Caco-2 (cell line): ENCODE measurements at regions of chr7 and their contacts with region 1.

Region 1: DNA sequence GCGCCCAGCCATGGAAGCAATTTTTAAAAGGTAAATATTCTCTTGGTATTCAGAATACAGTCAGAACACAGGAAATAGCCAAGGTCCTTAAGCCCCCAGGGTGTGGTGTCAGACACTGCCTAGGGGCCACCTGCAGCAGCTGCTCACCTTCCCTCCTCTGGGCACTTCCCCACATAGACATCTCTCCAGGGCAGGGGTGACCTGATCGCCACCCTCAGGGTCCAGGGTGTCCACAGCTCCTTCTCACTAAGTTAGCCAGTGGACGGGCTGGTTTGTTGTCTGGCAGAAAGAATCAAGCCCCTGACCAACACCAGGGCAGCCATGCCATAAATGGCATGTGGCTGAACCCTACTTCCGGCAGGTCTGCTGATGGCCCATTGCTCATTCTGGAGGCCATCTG is 15.9 kb downstream of the URGCP start:
- DNase-seq: no peak
- H3K4me3 ChIP-seq: no peak overlapping the region
- H3K4me3 Mint-ChIP-seq: no peak overlapping the region
- H3K27ac Mint-ChIP-seq: no peak overlapping the region
- H3K4me1 ChIP-seq: peaks cover 10% of the 10 kb centered on the region
- H3K4me1 Mint-ChIP-seq: peaks cover 8% of the 10 kb centered on the region
- H3K27me3 ChIP-seq: no peaks in the 10 kb centered on the region
- H3K27me3 Mint-ChIP-seq: no peaks in the 10 kb centered on the region
- CTCF ChIP-seq: no peak

Region 2: DNA sequence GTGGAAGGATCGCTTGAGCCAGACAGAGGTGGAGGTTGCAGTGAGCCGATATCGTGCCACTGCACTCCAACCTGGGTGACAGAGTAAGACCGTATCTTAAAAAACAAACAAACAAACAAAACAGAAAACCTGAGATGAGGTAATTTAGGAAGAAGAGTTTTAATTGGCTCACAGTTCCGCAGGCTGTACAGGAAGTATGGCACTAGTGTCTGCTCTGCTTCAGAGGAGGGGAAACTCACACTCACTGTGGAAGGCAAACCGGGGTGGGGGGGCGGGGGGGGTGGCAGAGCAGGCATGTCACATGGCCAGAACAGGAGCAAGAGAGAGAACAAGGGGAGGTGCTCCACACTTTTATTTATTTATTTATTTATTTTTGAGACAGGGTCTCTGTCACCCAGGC is 40.8 kb after region 1 on chr7:
- CTCF ChIA-PET with region 1: no interaction called
- POLR2A ChIA-PET with region 1: no interaction called
- intact Hi-C with region 1: no loop called
- DNase-seq: peak in 1 of 2 experiments; percentile 1
- H3K4me3 ChIP-seq: no peak overlapping the region
- H3K4me3 Mint-ChIP-seq: no peak overlapping the region
- H3K27ac Mint-ChIP-seq: no peak overlapping the region
- H3K4me1 ChIP-seq: no peaks in the 10 kb centered on the region
- H3K4me1 Mint-ChIP-seq: no peaks in the 10 kb centered on the region
- H3K27me3 ChIP-seq: no peaks in the 10 kb centered on the region
- H3K27me3 Mint-ChIP-seq: no peaks in the 10 kb centered on the region
- CTCF ChIP-seq: no peak

Region 3: DNA sequence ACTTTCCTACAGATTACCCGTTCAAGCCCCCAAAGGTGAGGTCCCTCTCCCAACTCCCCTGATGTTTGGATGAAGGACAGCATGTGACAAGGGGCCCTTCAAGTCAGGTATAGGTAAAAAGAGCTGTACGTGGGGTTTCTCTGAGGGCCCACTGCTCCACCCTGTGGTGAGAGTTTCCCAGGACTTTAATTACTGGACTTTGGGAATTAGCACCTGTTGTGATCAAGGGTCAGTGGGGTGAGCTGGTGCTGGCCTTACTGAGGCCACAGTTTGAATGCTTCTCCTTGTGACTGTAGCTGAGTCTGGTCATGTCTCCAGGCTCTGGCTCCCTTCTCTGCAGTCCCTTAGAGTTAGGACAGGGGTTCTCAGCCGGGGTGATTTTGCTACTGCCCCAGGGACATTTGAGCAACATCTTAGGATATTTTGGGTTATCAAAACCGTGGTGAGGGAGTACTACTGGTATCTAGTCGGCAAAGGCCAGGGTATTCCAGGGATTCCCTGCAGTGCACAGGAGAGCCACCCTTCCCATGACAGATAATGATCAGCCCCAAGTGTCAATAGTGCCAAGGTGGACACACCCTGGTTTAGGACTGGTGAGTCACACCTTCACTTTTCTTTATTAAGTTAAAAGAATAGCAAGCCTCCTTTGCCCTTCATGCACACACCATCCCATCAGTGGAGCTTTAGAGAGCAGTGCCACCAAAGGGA is 52.6 kb after region 1 on chr7:
- CTCF ChIA-PET with region 1: no interaction called
- POLR2A ChIA-PET with region 1: no interaction called
- intact Hi-C with region 1: loop called (anchors 5 kb)
- DNase-seq: peak; percentile 44
- H3K4me3 ChIP-seq: no peak overlapping the region
- H3K4me3 Mint-ChIP-seq: no peak overlapping the region
- H3K27ac Mint-ChIP-seq: peak overlapping the region; percentile 26
- H3K4me1 ChIP-seq: no peaks in the 10 kb centered on the region
- H3K4me1 Mint-ChIP-seq: peaks cover 10% of the 10 kb centered on the region
- H3K27me3 ChIP-seq: no peaks in the 10 kb centered on the region
- H3K27me3 Mint-ChIP-seq: no peaks in the 10 kb centered on the region
- CTCF ChIP-seq: peak in 1 of 2 experiments; percentile 61

Region 4: DNA sequence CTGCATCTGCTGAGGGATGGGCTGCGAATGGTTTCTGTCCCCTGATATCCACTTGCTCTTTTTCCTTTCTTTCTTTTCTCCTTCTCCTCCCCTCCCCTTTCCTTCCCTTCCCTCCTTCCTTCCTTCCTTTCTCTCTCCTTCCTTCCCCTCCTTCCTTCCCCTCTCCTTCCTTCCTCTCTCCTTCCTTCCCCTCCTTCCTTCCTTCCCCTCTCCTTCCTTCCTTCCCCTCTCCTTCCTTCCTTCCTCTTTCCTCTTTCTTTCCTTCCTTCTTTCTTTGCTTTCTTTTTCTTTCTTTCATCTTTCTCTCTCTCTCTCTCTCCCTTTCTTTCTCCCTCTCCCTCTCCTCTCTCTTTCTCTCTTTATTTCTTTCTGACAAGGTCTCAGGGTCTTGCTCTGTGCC is 87.0 kb after region 1 on chr7:
- CTCF ChIA-PET with region 1: no interaction called
- POLR2A ChIA-PET with region 1: no interaction called
- intact Hi-C with region 1: no loop called
- DNase-seq: no peak
- H3K4me3 ChIP-seq: no peak overlapping the region
- H3K4me3 Mint-ChIP-seq: no peak overlapping the region
- H3K27ac Mint-ChIP-seq: no peak overlapping the region
- H3K4me1 ChIP-seq: no peaks in the 10 kb centered on the region
- H3K4me1 Mint-ChIP-seq: no peaks in the 10 kb centered on the region
- H3K27me3 ChIP-seq: no peaks in the 10 kb centered on the region
- H3K27me3 Mint-ChIP-seq: no peaks in the 10 kb centered on the region
- CTCF ChIP-seq: no peak